Vagina (tissue), 2 donors: ENCODE measurements at regions of chr2 and their contacts with region 1.

Region 1: DNA sequence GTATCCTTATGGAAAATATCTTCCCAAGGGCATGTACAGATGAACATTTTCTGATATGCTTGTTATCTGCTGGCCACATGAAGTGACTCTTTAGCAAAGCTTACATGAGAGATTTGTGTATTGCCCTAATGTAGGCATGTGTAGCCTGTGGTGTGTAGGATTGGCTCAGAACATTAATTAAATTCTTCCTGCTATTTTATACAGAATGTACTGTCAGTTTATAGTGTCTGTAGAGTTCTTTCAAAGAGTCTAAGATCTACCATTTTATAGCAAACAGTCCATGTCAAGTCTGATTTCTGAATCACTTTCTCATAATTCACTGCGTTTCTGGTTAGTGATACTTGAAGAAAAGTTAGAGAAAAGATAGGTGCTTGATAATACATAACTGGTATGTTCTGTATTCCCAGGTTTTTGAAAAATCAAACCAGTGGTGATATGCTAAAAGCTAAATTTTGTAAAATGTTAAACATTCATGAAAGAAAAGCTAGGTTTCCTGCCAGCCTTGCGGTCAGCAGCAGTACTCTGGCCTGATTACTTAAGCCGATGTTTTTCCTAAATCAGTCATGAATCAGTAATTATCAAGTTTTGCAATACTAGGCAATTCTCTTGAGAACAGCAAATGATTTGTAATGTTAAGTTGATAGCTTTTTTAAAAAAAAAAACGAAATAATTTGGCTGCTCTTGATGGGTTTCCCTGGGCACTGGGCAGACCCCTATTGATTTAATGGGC is 30.9 kb upstream of the EFEMP1 start:
- DNase-seq: no peak
- H3K4me3 ChIP-seq: no peak overlapping the region
- H3K27ac ChIP-seq: peak overlapping the region; percentile 7
- H3K4me1 ChIP-seq: peaks cover 20% of the 10 kb centered on the region
- H3K27me3 ChIP-seq: no peaks in the 10 kb centered on the region
- CTCF ChIP-seq: no peak
- POLR2A ChIP-seq: no peak

Region 2: DNA sequence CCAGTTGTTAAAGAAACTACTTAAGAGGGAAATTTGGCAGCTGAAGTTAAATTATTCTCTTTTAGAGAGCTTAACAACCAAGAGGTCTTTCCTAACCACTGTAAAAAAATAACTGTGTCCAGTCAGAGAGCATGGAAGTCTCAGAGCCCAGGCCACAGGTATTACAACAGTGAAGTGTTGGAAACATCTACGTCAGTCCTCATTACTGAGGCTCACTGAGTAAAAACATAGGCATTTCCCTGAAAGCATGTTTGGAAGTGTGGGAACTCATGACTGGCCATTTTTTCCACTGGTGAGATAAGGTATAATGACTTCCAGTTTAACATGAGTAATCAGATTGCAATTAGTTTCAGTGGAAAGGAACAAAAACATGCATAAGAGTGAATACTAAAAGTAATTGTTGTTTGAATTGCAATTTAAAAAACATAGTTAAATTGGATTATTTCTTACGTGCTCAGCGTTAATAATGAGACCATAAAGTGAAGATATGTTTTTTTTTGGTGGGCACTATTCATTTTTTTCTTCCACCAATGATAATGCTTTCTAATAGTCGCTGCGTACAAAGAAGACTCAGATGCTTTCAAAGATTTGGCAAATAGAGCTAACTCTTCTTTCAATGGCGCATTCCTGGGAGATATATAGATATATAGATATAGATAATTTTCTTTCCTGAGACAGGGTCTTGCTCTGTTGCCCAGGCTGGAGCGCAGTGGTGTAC is 91.6 kb before region 1 on chr2:
- intact Hi-C with region 1: loop called (anchors 10 kb)
- DNase-seq: no peak
- H3K4me3 ChIP-seq: no peak overlapping the region
- H3K27ac ChIP-seq: peak overlapping the region; percentile 68
- H3K4me1 ChIP-seq: peaks cover 13% of the 10 kb centered on the region
- H3K27me3 ChIP-seq: no peaks in the 10 kb centered on the region
- CTCF ChIP-seq: no peak
- POLR2A ChIP-seq: no peak

Region 3: GRCh38 chr2:55923091-55923981 is 31.1 kb before region 1 on chr2 and contains the start of gene EFEMP1:
- intact Hi-C with region 1: loop called (anchors 2 kb)
- DNase-seq: no peak
- H3K4me3 ChIP-seq: peak within 1 kb of the TSS; percentile 65 to 70
- H3K27ac ChIP-seq: peak within 1 kb of the TSS; percentile 83
- H3K4me1 ChIP-seq: peaks cover 34% of the 10 kb centered on the region
- H3K27me3 ChIP-seq: no peaks in the 10 kb centered on the region
- CTCF ChIP-seq: no peak
- POLR2A ChIP-seq: peak in 1 of 2 donors; percentile 46
- total RNA-seq, gene EFEMP1: 235 TPM